GM13976 (cell line): ENCODE measurements at regions of chr1 and their contacts with region 1.

Region 1: GRCh38 chr1:172398970-172399755 is 21.3 kb upstream of the C1orf105 start:
- DNase-seq: no peak
- CTCF ChIP-seq: no peak

Region 2: GRCh38 chr1:172089768-172090510 is 309.2 kb before region 1 on chr1:
- in situ Hi-C with region 1: loop called (anchors 10 kb)
- DNase-seq: peak; percentile 30
- CTCF ChIP-seq: peak; percentile 68

Region 3: DNA sequence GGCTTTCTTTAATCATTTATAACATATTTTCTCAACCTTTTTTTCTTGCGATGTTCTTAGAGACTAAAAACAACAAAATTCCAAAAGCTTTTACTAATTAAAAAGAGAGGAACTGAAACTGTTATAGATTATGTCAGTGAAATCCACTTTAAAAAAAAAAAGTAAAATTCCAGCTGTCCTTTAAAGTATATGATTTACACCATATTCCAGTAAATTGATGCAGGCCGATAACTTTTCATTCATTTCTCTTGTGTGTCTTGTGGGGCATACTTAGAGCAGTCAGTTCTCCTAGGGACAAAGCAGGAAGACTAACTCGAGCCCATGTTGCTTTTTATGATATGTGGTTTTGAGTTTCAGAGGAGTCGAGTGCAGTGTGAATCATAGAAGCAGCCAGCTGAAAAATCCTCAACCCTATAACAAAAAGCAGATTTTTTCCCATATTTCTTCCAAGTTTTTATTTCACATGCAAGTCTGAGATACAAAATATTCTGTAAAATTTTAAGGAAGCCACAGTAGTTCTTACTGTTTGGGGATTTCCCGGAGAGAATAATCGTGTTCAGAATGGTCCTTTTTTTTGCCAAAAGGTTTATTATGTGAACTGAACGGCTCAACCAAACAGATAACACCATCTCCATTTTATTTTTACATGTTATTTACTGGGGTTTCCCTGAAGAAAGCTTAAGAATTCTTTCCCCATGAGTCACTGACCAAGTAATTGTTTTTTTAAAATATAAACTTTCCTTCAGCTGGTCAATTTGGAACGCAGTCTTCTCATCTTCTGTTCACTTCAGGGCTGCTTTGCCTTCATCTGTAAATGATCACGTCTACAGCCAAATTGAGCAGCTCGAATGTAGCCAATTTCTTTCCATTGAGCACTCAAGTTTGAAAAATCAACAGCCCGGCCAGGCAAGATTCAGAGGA is 55.7 kb before region 1 on chr1:
- in situ Hi-C with region 1: loop called (anchors 10 kb)
- DNase-seq: peak; percentile 5
- CTCF ChIP-seq: no peak